ENCODE measurements at regions of chr9 and their contacts with region 1.

Region 1: GRCh38 chr9:21096172-21096900 is 18.6 kb upstream of the IFNB1 start:
- DNase-seq: peak; percentile 59
- ATAC-seq: peak; percentile 95
- H3K4me3 Mint-ChIP-seq: peak overlapping the region; percentile 75
- H3K27ac Mint-ChIP-seq: peak overlapping the region; percentile 93
- H3K4me1 Mint-ChIP-seq: peaks cover 40% of the 10 kb centered on the region
- H3K27me3 Mint-ChIP-seq: no peaks in the 10 kb centered on the region
- CTCF ChIP-seq: no peak

Region 2: GRCh38 chr9:21001581-21001980 is 94.8 kb before region 1 on chr9:
- CTCF ChIA-PET with region 1: no interaction called
- POLR2A ChIA-PET with region 1: no interaction called
- intact Hi-C with region 1: loop called (anchors 5 kb)
- DNase-seq: peak; percentile 9
- ATAC-seq: peak; percentile 67
- H3K4me3 Mint-ChIP-seq: no peak overlapping the region
- H3K27ac Mint-ChIP-seq: peak overlapping the region; percentile 79
- H3K4me1 Mint-ChIP-seq: peaks cover 34% of the 10 kb centered on the region
- H3K27me3 Mint-ChIP-seq: no peaks in the 10 kb centered on the region
- CTCF ChIP-seq: no peak

Region 3: GRCh38 chr9:21031091-21031807 is 65.1 kb before region 1 on chr9 and contains the start of gene HACD4:
- CTCF ChIA-PET with region 1: interaction called, 4 read pairs
- POLR2A ChIA-PET with region 1: interaction called, 12 read pairs
- intact Hi-C with region 1: no loop called
- DNase-seq: peak; percentile 74
- ATAC-seq: peak; percentile 80
- H3K4me3 Mint-ChIP-seq: peak within 1 kb of the TSS; percentile 70
- H3K27ac Mint-ChIP-seq: peak within 1 kb of the TSS; percentile 87
- H3K4me1 Mint-ChIP-seq: peaks cover 26% of the 10 kb centered on the region
- H3K27me3 Mint-ChIP-seq: no peaks in the 10 kb centered on the region
- CTCF ChIP-seq: no peak
- total RNA-seq, gene HACD4: 4.0 to 4.1 TPM

Region 4: GRCh38 chr9:21326526-21327139 is 230.3 kb after region 1 on chr9:
- CTCF ChIA-PET with region 1: no interaction called
- POLR2A ChIA-PET with region 1: no interaction called
- intact Hi-C with region 1: no loop called
- DNase-seq: no peak
- ATAC-seq: peak; percentile 79
- H3K4me3 Mint-ChIP-seq: no peak overlapping the region
- H3K27ac Mint-ChIP-seq: no peak overlapping the region
- H3K4me1 Mint-ChIP-seq: peaks cover 42% of the 10 kb centered on the region
- H3K27me3 Mint-ChIP-seq: no peaks in the 10 kb centered on the region
- CTCF ChIP-seq: peak; percentile 68

Region 5: DNA sequence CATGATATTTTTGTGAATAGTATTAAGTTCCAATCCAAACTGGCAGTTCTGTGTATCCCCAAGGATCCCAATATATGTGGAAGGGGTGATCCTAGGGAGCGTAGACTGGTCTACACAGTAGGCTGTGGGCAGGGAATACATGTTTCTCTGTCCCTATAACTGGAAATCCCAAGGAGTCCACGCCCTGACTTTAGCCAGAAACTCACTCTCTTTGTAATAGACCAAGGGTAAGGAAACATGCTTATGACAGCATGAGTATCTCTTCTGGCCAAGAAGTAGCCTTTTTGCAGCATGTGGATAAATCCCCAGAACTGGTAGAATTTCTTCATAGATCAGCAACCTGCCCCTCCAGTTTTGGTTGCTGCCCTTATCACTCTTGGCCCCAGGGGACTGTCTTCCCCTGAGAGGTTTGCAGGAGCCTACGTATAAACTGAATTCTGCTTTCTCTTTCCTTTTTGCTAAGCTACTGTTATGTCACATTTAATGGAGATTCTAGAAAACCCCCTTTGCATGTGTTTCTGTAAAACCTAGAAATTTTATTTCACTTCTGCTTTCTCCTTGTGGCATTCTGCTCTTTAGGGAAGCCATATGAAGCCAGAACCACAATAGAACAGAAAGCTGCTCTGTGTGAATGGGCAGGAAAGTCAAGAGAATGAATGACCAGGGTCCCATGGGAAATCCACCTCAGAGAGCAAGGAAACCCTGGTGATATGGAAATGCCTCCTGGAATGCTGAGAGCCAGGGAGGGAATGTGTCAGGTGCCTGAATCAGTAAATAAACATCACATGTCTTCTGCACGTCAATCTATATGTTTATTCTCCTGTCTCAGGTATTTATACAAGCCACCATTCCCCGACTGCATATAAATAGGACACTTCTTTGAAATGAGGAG is 285.4 kb after region 1 on chr9:
- CTCF ChIA-PET with region 1: no interaction called
- POLR2A ChIA-PET with region 1: no interaction called
- intact Hi-C with region 1: no loop called
- DNase-seq: peak; percentile 34
- ATAC-seq: peak; percentile 91
- H3K4me3 Mint-ChIP-seq: peak overlapping the region; percentile 24
- H3K27ac Mint-ChIP-seq: no peak overlapping the region
- H3K4me1 Mint-ChIP-seq: peaks cover 20% of the 10 kb centered on the region
- H3K27me3 Mint-ChIP-seq: peaks cover 31% of the 10 kb centered on the region
- CTCF ChIP-seq: no peak